WTC11 (cell line): ENCODE measurements at regions of chr17 and their contacts with region 1.

Region 1: GRCh38 chr17:51435641-51436091 is 175.3 kb downstream of the UTP18 start:
- DNase-seq: peak; percentile 79
- ATAC-seq: peak; percentile 97
- H3K4me3 Mint-ChIP-seq: no peak overlapping the region
- H3K27ac Mint-ChIP-seq: no peak overlapping the region
- H3K4me1 Mint-ChIP-seq: peaks cover 15% of the 10 kb centered on the region
- H3K27me3 Mint-ChIP-seq: no peaks in the 10 kb centered on the region
- CTCF ChIP-seq: peak; percentile 38; the same call in 1 of the 2 replicates

Region 2: GRCh38 chr17:51371732-51372151 is 63.9 kb before region 1 on chr17:
- CTCF ChIA-PET with region 1: interaction called, 15 read pairs
- POLR2A ChIA-PET with region 1: no interaction called
- DNase-seq: peak; percentile 64
- ATAC-seq: peak; percentile 88
- H3K4me3 Mint-ChIP-seq: peak overlapping the region; percentile 54
- H3K27ac Mint-ChIP-seq: peak overlapping the region; percentile 30; the same call in 1 of the 2 replicates
- H3K4me1 Mint-ChIP-seq: peaks cover 37% of the 10 kb centered on the region
- H3K27me3 Mint-ChIP-seq: no peaks in the 10 kb centered on the region; the same call in 1 of the 2 replicates
- CTCF ChIP-seq: peak; percentile 53

Region 3: DNA sequence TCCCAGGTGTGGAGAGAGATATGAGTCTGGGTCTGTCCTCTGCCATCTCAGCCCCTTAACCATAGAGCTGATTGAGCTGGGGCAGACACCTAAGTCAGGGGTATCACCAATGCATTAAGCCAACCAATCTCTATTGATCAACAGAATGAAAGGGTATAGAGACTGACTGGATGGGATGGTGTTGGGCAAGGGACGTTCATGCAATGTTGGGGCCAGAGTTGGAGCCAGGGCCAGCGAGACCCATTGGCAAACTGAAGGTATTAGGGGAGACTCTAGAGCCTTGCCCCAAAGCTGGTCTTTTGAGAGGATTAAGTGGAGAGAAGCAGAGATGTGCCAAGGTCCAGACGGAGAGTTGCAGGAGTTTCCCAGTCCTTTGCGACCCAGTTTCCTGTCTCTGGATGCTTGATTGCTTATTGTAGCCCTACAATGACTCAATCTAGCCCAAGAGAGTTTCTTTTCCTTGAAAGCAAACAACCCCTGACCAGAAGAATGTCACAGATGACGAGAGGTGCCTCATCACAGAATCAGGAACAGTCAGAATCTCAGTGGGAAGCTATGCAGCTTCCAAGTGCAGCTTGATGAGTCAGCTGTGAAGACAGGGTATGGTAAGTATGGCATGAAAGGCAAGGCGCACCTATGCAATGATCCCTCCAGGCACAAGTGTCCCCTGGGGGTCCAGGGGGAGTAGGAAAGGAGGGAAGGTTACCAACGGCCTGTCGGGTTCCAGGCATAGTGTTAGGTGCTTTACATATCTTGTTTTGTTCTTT is 38.1 kb before region 1 on chr17:
- CTCF ChIA-PET with region 1: interaction called, 16 read pairs
- POLR2A ChIA-PET with region 1: no interaction called
- DNase-seq: no peak
- ATAC-seq: no peak
- H3K4me3 Mint-ChIP-seq: no peak overlapping the region
- H3K27ac Mint-ChIP-seq: no peak overlapping the region
- H3K4me1 Mint-ChIP-seq: no peaks in the 10 kb centered on the region
- H3K27me3 Mint-ChIP-seq: 0 out of 2 replicates have a peak, but pooled peaks cover 2% of the 10 kb centered on the region
- CTCF ChIP-seq: no peak

Region 4: GRCh38 chr17:51419476-51419875 is 16.2 kb before region 1 on chr17:
- CTCF ChIA-PET with region 1: interaction called, 15 read pairs
- POLR2A ChIA-PET with region 1: no interaction called
- DNase-seq: no peak
- ATAC-seq: no peak
- H3K4me3 Mint-ChIP-seq: no peak overlapping the region
- H3K27ac Mint-ChIP-seq: no peak overlapping the region
- H3K4me1 Mint-ChIP-seq: peaks cover 14% of the 10 kb centered on the region
- H3K27me3 Mint-ChIP-seq: peaks cover 8% of the 10 kb centered on the region; the same call in 1 of the 2 replicates
- CTCF ChIP-seq: no peak

Region 5: DNA sequence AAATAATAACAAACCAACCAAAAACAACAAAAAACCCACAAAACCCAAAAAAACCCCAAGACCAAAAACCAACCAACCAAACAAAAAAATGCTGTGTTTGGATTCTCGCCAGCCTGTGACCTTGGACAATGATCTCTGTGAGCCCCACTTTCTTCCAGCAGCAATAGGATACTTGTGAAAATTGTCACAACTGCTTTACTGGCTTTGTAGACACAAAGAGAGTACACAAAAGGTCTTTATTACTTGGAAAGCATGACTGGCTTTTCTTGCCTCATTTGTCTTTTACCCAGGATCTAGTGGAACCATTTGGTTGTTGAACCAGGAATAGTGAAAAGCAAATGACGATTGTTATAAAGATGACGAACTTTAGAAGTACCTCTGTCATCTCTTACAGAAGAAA is 81.3 kb after region 1 on chr17:
- CTCF ChIA-PET with region 1: no interaction called
- POLR2A ChIA-PET with region 1: no interaction called
- DNase-seq: no peak
- ATAC-seq: no peak
- H3K4me3 Mint-ChIP-seq: no peak overlapping the region
- H3K27ac Mint-ChIP-seq: no peak overlapping the region
- H3K4me1 Mint-ChIP-seq: no peaks in the 10 kb centered on the region
- H3K27me3 Mint-ChIP-seq: peaks cover 4% of the 10 kb centered on the region; the same call in 1 of the 2 replicates
- CTCF ChIP-seq: no peak

Region 6: DNA sequence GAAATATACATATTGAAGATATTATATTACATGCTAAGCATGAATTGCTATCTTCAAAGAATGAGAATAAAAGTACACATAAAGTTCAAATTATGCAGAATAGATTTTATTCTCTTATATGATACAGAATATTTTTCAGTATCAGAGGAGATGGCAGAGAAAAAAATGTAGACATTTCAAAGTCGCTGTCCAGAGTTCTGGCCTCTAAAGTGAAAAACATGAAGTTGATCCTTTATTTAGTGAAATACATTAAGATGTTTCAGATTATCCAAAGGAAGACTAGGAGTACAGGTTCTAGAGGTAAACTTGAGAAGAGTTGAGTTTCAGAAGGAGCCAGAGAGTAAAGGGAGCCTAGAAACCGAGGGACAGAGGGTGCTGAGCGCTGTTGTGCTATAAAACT is 128.3 kb after region 1 on chr17:
- CTCF ChIA-PET with region 1: no interaction called
- POLR2A ChIA-PET with region 1: no interaction called
- DNase-seq: no peak
- ATAC-seq: no peak
- H3K4me3 Mint-ChIP-seq: no peak overlapping the region
- H3K27ac Mint-ChIP-seq: no peak overlapping the region
- H3K4me1 Mint-ChIP-seq: no peaks in the 10 kb centered on the region
- H3K27me3 Mint-ChIP-seq: peaks cover 6% of the 10 kb centered on the region; the same call in 1 of the 2 replicates
- CTCF ChIP-seq: no peak